ENCODE measurements at regions of chr17 and their contacts with region 1.

Region 1: DNA sequence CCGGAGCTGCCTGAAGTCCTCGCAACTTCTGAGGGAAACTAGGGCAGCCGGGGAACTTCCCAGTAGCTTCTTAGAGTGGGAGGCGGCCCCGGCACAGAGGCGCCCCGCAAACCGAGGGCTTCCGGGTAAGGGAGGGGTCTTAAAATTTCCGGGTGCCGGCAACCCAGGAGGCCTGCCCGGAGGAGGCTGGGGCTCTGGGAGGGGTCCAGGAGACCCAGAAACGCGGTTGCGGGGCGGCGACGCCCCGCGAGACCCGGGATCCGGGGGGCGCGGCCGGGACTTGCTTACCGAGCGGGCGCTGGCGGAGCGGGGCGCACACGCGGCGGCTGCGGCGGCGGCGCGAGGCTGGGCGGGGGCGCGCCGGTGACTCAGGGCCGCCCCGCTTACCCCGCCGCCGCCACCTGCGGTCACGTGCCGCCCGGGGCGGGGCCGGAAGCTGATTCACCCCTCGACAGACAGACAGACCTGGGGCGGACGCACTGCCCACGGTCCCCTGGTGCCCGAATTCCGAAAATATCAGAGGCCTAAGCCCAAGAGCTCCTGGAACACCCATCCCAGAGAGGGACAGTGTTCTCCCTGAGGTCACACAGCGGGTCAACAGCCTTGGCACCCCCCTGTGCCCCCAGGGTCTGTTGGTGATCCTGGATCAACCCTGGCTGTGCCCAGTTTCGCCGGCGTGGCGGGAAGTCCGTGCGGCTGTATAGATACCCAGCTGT is at the start of gene FAM83G:
- DNase-seq: peak; percentile 85
- H3K4me3 ChIP-seq: peak within 1 kb of the TSS; percentile 56 to 67
- H3K27ac ChIP-seq: peak within 1 kb of the TSS; percentile 66 to 71
- H3K4me1 ChIP-seq: no peaks in the 10 kb centered on the region
- H3K27me3 ChIP-seq: no peaks in the 10 kb centered on the region
- CTCF ChIP-seq: peak in 1 of 4 experiments; percentile 16
- POLR2A ChIP-seq: peak; percentile 29
- total RNA-seq, gene FAM83G: 7.3 to 9.5 TPM

Region 2: DNA sequence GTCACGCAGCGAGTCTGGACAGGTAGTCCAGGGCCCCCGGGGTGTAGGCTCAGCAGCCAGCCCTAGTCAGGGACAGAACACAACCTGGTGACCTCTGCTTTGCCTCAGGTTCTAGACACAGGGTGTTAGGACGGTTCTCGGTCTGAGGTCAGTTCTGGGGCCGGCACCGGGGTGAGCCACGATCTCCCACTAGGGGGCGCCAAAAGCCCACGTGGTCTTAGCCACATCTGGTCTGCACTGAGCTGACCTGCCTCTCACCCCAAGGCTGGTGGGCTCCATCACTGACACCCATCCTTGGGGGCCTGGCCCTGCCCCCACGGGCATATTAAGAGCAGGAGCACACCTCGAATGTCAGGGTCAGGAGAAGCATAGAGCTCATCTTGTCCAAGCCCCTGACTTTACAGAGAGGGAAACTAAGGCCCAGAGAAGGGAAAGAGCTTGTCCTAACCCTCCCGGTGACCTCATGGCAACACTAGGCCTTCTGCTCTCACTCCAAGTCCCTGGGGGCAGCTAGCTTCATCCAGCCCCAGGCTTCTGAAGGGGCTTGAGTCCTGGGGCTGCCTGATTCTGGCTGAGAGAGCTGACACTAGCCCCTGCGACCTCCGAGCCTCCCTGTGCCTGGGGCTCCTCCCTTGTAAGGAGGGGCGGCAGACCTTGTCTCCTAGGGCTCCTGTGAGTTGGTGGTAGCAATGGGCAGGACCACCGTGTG is 43.6 kb before region 1 on chr17:
- intact Hi-C with region 1: loop called (anchors 5 kb)
- DNase-seq: peak; percentile 71
- H3K4me3 ChIP-seq: no peak overlapping the region
- H3K27ac ChIP-seq: no peak overlapping the region
- H3K4me1 ChIP-seq: no peaks in the 10 kb centered on the region
- H3K27me3 ChIP-seq: no peaks in the 10 kb centered on the region
- CTCF ChIP-seq: peak; percentile 87 to 99 (median 93)
- POLR2A ChIP-seq: no peak

Measured in prostate gland (tissue), 2 donors.